ENCODE measurements at regions of chr7 and their contacts with region 1.

Region 1: GRCh38 chr7:32891800-32892520 is 400 bp upstream of the KBTBD2 start:
- DNase-seq: peak; percentile 97
- ATAC-seq: peak; percentile 81
- H3K4me3 ChIP-seq: peak overlapping the region; percentile 79 to 97 (median 80)
- H3K27ac ChIP-seq: peak overlapping the region; percentile 96
- H3K4me1 ChIP-seq: peaks cover 52% of the 10 kb centered on the region
- H3K27me3 ChIP-seq: no peaks in the 10 kb centered on the region
- CTCF ChIP-seq: no peak
- EP300 ChIP-seq: peak in 1 of 2 experiments; percentile 7; a peak in 1 of 4 replicates
- POLR2A ChIP-seq: peak; percentile 81 to 85
- RAD21 ChIP-seq: no peak

Region 2: DNA sequence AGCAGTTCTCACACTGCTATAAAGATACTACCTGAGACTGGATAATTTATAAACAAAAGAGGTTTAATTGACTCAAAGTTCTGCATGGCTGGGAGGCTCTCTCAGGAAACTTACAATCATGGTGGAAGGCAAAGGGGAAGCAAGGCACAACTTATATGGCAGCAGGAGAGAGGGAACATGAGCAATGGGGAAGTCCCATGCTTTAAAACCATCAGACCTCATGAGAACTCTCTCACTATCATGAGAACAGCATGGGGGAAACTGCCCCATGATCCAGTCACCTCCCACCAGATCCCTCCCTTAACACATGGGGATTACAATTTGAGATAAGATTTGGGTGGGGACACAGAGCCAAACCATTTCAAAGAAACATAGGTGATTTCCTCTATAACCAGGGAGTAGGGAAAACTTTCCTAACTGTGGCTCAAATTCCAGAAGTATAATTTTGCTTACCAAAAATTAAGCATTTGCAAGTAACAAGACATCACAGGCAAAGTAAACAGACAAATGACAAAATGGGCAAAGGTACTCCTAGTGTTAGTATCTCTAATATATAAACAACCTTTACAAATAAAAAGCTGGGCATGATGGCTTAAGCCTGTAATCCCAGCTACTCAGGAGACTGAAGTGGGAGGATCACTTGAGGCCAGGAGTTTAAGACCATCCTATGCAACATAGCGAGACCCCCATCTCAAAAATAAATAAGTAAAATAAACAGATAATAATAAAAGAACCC is 88.4 kb before region 1 on chr7:
- CTCF ChIA-PET with region 1: no interaction called
- POLR2A ChIA-PET with region 1: interaction called, 3 read pairs
- in situ Hi-C with region 1: no loop called
- intact Hi-C with region 1: loop called (anchors 5 kb)
- DNase-seq: no peak
- ATAC-seq: no peak
- H3K4me3 ChIP-seq: no peak overlapping the region
- H3K27ac ChIP-seq: no peak overlapping the region
- H3K4me1 ChIP-seq: no peaks in the 10 kb centered on the region
- H3K27me3 ChIP-seq: no peaks in the 10 kb centered on the region
- CTCF ChIP-seq: no peak
- EP300 ChIP-seq: no peak
- POLR2A ChIP-seq: no peak
- RAD21 ChIP-seq: no peak

Region 3: GRCh38 chr7:33040803-33041516 is 149.0 kb after region 1 on chr7:
- CTCF ChIA-PET with region 1: no interaction called
- POLR2A ChIA-PET with region 1: no interaction called
- in situ Hi-C with region 1: no loop called
- intact Hi-C with region 1: loop called (anchors 10 kb)
- DNase-seq: no peak
- ATAC-seq: peak; percentile 26; the same call in 1 of the 3 replicates
- H3K4me3 ChIP-seq: no peak overlapping the region
- H3K27ac ChIP-seq: peak overlapping the region; percentile 42
- H3K4me1 ChIP-seq: peaks cover 76% of the 10 kb centered on the region
- H3K27me3 ChIP-seq: no peaks in the 10 kb centered on the region
- CTCF ChIP-seq: no peak
- EP300 ChIP-seq: no peak
- POLR2A ChIP-seq: no peak
- RAD21 ChIP-seq: no peak

Region 4: GRCh38 chr7:33109005-33109757 is 217.2 kb after region 1 on chr7 and contains the start of gene RP9:
- CTCF ChIA-PET with region 1: no interaction called
- POLR2A ChIA-PET with region 1: no interaction called
- in situ Hi-C with region 1: no loop called
- intact Hi-C with region 1: loop called (anchors 5 kb)
- DNase-seq: peak; percentile 71
- ATAC-seq: peak; percentile 91
- H3K4me3 ChIP-seq: peak within 1 kb of the TSS; percentile 85 to 88 (median 87)
- H3K27ac ChIP-seq: peak within 1 kb of the TSS; percentile 77
- H3K4me1 ChIP-seq: peaks cover 55% of the 10 kb centered on the region
- H3K27me3 ChIP-seq: peaks cover 1 to 6% of the 10 kb centered on the region in 2 experiments; a peak in 2 of 5 replicates
- CTCF ChIP-seq: peak; percentile 76
- EP300 ChIP-seq: no peak
- POLR2A ChIP-seq: peak; percentile 69
- RAD21 ChIP-seq: peak; percentile 75; the same call in 1 of the 2 replicates
- total RNA-seq, gene RP9: 14.2 and 15.1 TPM in 2 replicates